ENCODE measurements at regions of chr3 and their contacts with region 1.

Region 1: GRCh38 chr3:2862366-2862765 is 247.8 kb downstream of the IL5RA start:
- DNase-seq: no peak

Region 2: GRCh38 chr3:2839876-2840275 is 22.5 kb before region 1 on chr3:
- intact Hi-C with region 1: no loop called
- DNase-seq: no peak

Region 3: GRCh38 chr3:3560591-3561311 is 698.4 kb after region 1 on chr3:
- intact Hi-C with region 1: loop called in 1 of 2 experiments (anchors 5 kb)
- DNase-seq: no peak